Stomach (tissue), 19 donors: ENCODE measurements at regions of chr1 and their contacts with region 1.

Region 1: DNA sequence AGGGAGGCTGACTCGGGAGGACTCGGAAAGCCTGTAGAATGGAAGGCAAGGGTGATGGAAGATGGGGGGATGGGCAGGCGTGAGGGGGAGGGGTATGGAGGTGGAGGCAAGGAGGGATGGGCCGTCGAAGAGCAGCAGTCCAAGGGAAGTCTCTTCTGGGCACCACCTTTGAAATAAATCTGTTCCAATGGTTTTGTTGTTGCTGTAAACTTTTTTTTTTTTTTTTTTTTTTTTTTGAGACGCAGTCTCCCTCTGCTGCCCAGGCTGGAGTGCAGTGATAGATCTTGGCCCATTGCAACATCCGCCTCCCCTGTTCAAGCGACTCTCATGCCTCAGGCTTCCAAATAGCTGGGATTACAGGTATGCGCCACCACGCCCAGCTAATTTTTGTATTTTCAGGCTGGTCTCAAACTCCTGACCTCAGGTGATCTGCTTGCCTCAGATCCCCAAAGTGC is 79.0 kb upstream of the SLC45A1 start:
- DNase-seq: peak; percentile 37 to 61
- H3K4me3 ChIP-seq: no peak overlapping the region
- H3K27ac ChIP-seq: peak overlapping the region; percentile 55 to 80 (median 70)
- H3K4me1 ChIP-seq: peaks cover 14 to 27% (median 19%) of the 10 kb centered on the region in 4 donors
- H3K27me3 ChIP-seq: no peaks in the 10 kb centered on the region
- CTCF ChIP-seq: peak in 3 of 7 experiments; percentile 18 to 32 (median 19)
- EP300 ChIP-seq: no peak
- POLR2A ChIP-seq: no peak

Region 2: DNA sequence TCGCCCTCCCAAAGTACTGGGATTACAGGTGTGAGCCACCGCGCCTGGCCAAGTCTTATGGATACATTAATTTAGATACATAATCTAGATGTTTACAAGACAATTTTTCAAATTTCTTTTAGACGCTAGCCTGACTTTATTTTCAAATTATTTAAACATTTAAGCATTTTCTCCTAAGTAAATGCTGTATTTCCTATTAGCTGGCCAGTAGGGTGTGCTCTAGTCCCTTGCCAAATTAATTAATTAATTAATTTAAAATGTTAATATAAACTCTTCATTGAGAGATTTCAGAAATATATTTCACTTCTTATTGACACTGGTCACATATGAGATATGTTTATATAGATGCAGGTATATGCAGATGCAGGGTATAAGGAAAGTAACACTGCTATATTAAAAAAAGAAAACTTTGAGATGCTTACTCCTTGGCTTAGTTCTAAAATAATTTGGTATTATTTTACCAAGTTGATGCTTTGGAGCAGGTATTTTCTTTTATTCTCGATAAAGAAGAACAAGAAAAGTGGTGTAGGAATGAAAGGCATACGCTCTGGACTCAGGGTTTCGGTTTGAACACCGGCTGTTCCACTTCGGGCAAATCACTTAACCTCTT is 207.6 kb before region 1 on chr1:
- intact Hi-C with region 1: loop called (anchors 10 kb)
- DNase-seq: peak in 1 of 2 donors; percentile 72
- H3K4me3 ChIP-seq: no peak overlapping the region
- H3K27ac ChIP-seq: peak overlapping the region in 1 of 5 donors; percentile 60
- H3K4me1 ChIP-seq: peaks cover 21 to 40% (median 30%) of the 10 kb centered on the region in 4 donors
- H3K27me3 ChIP-seq: no peaks in the 10 kb centered on the region
- CTCF ChIP-seq: peak in 5 of 7 experiments; percentile 45 to 75 (median 52)
- EP300 ChIP-seq: no peak
- POLR2A ChIP-seq: no peak